PC-9 (cell line): ENCODE measurements at regions of chr20 and their contacts with region 1.

Region 1: DNA sequence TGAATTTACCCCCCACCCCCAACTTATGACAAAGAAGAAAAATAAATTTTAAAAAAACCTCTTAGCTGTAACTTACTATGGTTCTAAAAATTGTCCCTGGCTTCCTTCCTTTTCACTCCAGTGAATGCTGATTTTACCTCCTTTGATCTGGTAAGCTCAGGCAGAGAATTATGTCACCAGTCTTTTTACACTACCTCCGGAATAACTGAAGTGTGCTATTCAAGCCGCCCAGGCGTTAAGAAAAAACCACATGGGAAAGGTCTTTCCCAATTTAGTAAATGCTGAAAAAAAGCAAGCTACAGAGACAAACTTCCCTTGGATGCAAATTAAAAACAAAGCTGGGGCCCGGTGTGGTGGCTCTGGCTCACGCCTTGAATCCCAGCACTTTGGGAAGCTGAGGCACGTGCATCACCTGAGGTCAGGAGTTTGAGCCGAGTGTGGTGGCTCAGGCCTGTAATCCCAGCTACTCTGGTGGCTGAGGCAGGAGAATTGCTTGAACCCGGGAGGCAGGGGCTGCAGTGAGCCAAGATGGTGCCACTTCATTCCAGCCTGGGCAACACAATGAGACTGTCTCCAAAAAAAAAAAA is 12.4 kb downstream of the SNX5 start:
- DNase-seq: no peak
- H3K4me3 ChIP-seq: no peak overlapping the region
- H3K27ac ChIP-seq: no peak overlapping the region
- H3K4me1 ChIP-seq: peaks cover 9% of the 10 kb centered on the region
- H3K27me3 ChIP-seq: no peaks in the 10 kb centered on the region
- CTCF ChIP-seq: no peak

Region 2: DNA sequence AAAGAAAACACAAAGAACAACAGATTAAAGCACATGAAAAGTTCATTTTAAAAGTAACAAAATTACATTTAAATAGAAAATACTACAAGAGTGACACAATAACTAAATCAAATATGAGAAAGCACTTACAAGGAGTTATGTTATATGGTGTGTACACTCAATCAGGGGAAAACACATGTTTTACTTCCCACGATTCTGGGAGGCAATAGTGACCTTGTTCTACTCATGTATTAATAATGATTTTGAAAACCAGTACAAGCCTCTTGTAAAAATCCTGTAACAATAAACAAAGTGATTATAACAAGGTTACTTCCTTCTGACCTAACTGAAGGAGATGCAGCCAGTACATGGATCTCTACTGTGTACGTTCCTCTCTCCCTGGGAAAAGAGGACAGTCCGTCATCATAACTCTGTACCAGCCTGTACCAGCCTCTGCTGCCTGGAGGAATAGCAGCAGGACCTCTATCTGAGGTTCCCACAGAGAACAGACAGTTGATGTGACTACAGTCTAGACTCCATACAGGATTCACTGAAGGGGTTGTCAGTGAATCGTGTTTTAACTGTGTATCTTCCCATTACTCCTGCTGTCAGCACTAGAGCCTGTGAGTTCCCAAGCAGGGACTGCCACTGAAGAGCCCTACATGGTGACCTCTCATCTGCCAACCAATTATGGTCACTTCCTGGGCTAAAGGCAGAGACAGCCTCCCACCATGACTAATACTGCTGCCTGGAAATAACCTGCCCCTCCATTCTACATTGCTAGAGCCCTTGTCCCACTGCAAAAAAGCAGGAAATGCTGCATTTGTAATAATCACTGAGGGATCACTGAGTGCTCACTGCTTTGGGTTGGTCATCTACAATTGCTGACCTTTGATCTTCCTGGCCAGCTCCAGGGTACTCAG is 1532.6 kb before region 1 on chr20:
- CTCF ChIA-PET with region 1: interaction called, 14 read pairs
- POLR2A ChIA-PET with region 1: no interaction called
- intact Hi-C with region 1: no loop called
- DNase-seq: no peak
- H3K4me3 ChIP-seq: no peak overlapping the region
- H3K27ac ChIP-seq: no peak overlapping the region
- H3K4me1 ChIP-seq: peaks cover 10% of the 10 kb centered on the region; the same call in 1 of the 2 replicates
- H3K27me3 ChIP-seq: no peaks in the 10 kb centered on the region
- CTCF ChIP-seq: no peak

Region 3: DNA sequence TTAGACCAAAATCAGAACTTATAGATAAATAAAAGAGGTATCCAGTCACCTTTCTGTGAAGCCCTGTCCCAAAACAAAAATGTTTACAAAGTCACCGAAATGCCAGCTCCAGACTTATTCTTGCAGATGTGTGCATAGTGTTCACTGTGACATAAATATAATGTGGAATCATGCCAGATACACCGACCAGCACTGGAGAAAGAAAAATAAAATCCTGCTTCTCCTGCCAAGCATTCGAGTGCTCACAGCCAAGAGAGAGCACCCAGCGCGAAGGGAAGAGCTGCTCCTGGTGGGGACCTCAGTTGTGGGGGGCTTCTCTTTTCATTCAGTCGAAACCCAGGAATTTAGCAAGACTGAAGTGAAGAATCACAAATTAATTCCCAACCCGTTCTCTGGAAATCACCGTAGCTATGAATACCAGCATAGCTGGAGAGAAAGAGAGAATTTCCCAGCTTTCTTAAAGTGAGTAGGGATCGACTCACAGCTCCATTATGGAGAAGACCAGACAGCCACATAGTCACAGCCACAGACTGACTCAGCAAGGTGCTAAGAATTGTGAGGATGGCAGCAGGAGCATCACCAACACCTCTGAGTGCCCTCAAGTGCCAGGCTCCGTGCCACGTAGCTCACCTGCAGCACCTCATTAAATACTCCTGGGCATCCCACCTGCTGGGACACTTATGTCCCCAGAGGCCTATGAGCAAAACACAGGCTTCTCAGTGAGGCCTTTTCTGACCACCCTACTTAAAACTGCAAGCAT is 458.2 kb before region 1 on chr20:
- CTCF ChIA-PET with region 1: interaction called, 10 read pairs
- POLR2A ChIA-PET with region 1: no interaction called
- intact Hi-C with region 1: no loop called
- DNase-seq: no peak
- H3K4me3 ChIP-seq: no peak overlapping the region
- H3K27ac ChIP-seq: no peak overlapping the region
- H3K4me1 ChIP-seq: peaks cover 8% of the 10 kb centered on the region
- H3K27me3 ChIP-seq: peaks cover 7% of the 10 kb centered on the region
- CTCF ChIP-seq: no peak

Region 4: GRCh38 chr20:17898548-17898994 is 57.6 kb before region 1 on chr20:
- CTCF ChIA-PET with region 1: no interaction called
- POLR2A ChIA-PET with region 1: no interaction called
- intact Hi-C with region 1: no loop called
- DNase-seq: peak; percentile 33 to 65
- H3K4me3 ChIP-seq: no peak overlapping the region
- H3K27ac ChIP-seq: no peak overlapping the region
- H3K4me1 ChIP-seq: no peaks in the 10 kb centered on the region
- H3K27me3 ChIP-seq: no peaks in the 10 kb centered on the region
- CTCF ChIP-seq: peak; percentile 96